A673 (cell line): ENCODE measurements at regions of chr11 and their contacts with region 1.

Region 1: DNA sequence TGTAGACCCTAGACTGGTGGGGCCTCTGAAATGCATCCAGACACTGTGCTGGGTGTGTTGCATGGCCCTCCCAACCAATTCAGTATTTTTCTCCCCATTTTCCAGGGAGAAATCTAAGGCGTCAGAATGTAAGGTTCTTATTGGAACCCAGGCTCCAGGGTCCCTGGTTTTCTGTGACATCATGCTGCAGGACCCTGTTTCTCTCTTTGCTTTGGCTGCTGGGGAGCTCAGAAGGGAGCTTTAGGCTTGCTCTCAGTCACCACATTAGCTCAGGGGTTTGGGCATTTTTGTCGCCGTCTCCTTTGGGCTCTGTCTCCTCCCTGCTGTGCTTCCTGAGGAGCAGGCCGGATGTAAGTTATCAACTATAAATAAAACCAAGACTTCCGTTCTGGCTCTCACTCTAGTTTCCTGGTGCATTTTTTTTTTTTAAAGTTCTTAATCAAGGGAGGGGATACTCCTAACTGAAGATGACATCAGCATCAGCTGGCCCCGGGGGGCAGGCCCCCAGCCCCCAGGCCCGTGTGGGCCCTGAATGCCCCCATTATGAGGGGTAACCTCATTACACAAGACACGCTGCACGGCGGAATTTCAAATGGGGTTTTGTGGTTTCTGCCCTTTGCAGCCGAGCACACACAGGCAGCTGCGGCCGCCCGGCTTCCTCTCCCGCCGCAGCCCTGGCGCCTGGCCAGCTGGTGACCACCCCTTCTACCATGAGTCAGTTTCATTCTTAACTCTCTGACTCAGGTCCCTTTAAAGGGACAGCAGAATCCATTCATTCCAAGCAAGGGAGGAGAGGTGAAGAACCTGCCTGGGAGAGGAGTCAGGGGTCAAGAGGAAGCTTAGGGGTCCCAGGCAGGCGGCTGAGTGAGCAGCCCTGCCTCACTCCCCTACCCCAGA is 3.2 kb downstream of the MYEOV start:
- DNase-seq: peak; percentile 98
- H3K4me3 ChIP-seq: peak overlapping the region; percentile 77
- H3K27ac ChIP-seq: peak overlapping the region; percentile 92
- H3K4me1 ChIP-seq: peaks cover 74% of the 10 kb centered on the region
- H3K27me3 ChIP-seq: no peaks in the 10 kb centered on the region
- CTCF ChIP-seq: no peak

Region 2: DNA sequence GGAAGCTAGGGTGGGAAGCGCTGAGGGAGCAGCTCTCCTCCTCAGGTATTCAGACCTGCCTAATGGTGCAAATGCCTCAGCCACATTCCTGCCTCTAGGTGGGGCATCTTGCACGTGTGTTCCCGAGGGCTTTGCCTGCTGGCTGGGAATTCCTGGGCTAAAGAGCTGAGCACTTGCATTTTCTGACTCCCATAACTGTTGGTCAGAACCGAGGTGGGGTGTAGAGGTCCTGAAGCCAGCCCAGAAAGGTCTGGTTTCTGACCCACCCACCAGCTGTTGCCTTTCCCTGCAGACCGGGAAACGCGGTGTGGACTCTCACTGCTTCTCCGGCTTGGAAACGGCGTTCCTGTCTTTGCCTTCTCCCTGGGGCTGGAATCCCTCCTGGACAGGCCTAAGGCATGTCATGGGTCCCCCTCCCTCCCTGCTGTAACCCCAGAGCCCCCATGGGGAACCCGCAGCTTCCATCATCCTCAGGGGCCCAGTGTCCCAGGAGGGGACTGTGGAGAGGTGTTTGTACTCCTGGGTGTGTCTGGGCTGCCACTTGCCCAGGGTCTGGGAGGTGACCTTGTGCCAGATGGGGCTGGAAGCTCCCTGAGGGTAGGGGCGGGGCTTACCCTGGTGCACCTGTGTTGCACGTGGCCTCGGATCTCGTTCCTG is 165.4 kb before region 1 on chr11:
- CTCF ChIA-PET with region 1: interaction called, 7 read pairs
- POLR2A ChIA-PET with region 1: no interaction called
- intact Hi-C with region 1: loop called (anchors 2 kb)
- DNase-seq: peak; percentile 88
- H3K4me3 ChIP-seq: no peak overlapping the region
- H3K27ac ChIP-seq: peak overlapping the region; percentile 91
- H3K4me1 ChIP-seq: peaks cover 28% of the 10 kb centered on the region
- H3K27me3 ChIP-seq: no peaks in the 10 kb centered on the region
- CTCF ChIP-seq: peak; percentile 97

Region 3: DNA sequence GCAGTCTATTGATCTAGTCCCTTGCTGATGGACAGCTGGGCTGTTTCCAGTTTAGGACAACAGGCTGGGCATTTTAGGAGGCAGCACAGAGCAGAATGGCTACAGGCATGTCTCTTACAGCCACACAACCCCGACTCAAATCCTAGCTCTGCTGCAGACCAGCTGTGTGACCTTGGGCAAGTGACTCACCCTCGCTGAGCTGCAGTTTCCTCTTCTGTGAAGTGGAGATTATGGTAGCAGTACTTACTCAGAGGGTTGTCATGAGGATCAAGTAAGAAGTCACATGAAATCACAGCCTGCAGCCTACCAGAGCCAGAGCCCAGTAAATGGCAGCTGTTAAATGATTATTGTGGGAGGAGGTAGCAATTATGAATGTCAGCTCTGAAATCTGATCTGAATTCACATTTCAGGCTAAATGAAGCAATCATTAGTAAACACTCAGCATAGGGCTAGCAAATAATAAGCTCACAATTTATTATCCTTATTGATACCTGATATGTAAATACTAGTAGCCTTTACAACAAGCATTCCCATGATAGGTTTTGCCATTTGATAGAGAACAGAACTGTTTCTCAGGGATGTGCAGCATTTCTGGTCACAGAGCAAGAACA is 55.7 kb after region 1 on chr11:
- CTCF ChIA-PET with region 1: interaction called, 4 read pairs
- POLR2A ChIA-PET with region 1: no interaction called
- intact Hi-C with region 1: loop called (anchors 5 kb)
- DNase-seq: peak; percentile 84
- H3K4me3 ChIP-seq: no peak overlapping the region
- H3K27ac ChIP-seq: peak overlapping the region; percentile 69
- H3K4me1 ChIP-seq: peaks cover 68% of the 10 kb centered on the region
- H3K27me3 ChIP-seq: no peaks in the 10 kb centered on the region
- CTCF ChIP-seq: no peak

Region 4: GRCh38 chr11:69368119-69368881 is 71.2 kb after region 1 on chr11:
- CTCF ChIA-PET with region 1: no interaction called
- POLR2A ChIA-PET with region 1: no interaction called
- intact Hi-C with region 1: loop called (anchors 5 kb)
- DNase-seq: no peak
- H3K4me3 ChIP-seq: no peak overlapping the region
- H3K27ac ChIP-seq: no peak overlapping the region
- H3K4me1 ChIP-seq: peaks cover 22% of the 10 kb centered on the region
- H3K27me3 ChIP-seq: no peaks in the 10 kb centered on the region
- CTCF ChIP-seq: no peak

Region 5: GRCh38 chr11:69393953-69394883 is 97.1 kb after region 1 on chr11:
- CTCF ChIA-PET with region 1: no interaction called
- POLR2A ChIA-PET with region 1: no interaction called
- intact Hi-C with region 1: no loop called
- DNase-seq: no peak
- H3K4me3 ChIP-seq: no peak overlapping the region
- H3K27ac ChIP-seq: peak overlapping the region; percentile 1
- H3K4me1 ChIP-seq: peaks cover 10% of the 10 kb centered on the region
- H3K27me3 ChIP-seq: no peaks in the 10 kb centered on the region
- CTCF ChIP-seq: no peak

Region 6: GRCh38 chr11:69443138-69443967 is 146.2 kb after region 1 on chr11:
- CTCF ChIA-PET with region 1: no interaction called
- POLR2A ChIA-PET with region 1: no interaction called
- intact Hi-C with region 1: loop called (anchors 2 kb)
- DNase-seq: peak; percentile 98
- H3K4me3 ChIP-seq: peak overlapping the region; percentile 38
- H3K27ac ChIP-seq: peak overlapping the region; percentile 79
- H3K4me1 ChIP-seq: peaks cover 29% of the 10 kb centered on the region
- H3K27me3 ChIP-seq: no peaks in the 10 kb centered on the region
- CTCF ChIP-seq: no peak

Region 7: DNA sequence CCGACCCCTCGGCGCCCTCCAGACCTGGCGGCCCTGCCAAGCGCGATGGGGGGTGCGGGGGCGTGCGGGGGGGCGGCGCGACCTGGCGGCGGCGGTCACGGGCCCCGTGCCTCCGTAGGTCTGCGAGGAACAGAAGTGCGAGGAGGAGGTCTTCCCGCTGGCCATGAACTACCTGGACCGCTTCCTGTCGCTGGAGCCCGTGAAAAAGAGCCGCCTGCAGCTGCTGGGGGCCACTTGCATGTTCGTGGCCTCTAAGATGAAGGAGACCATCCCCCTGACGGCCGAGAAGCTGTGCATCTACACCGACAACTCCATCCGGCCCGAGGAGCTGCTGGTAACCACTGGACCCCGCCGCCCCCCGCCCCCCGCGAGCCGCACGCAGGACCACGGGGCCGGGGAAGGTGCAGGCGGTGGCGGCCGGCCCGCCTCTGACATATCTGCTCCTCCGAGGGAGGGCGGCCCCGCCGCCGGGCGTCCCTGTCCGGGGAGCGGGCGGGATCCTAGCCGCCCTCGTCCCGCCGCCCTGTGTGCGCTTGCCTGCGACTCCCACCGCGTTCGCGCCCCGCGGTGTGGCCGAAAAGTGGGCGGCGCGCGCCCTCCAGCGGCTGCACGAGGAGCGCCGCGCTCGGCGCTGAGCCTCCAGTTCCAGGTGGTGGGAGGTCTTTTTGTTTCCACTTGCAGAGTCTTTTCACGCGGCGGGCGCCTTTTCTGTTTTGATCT is 345.9 kb after region 1 on chr11:
- CTCF ChIA-PET with region 1: interaction called, 3 read pairs
- POLR2A ChIA-PET with region 1: no interaction called
- intact Hi-C with region 1: loop called (anchors 5 kb)
- DNase-seq: peak; percentile 92
- H3K4me3 ChIP-seq: peak overlapping the region; percentile 86
- H3K27ac ChIP-seq: peak overlapping the region; percentile 99
- H3K4me1 ChIP-seq: peaks cover 30% of the 10 kb centered on the region
- H3K27me3 ChIP-seq: no peaks in the 10 kb centered on the region
- CTCF ChIP-seq: peak; percentile 82